Activated naive CD4-positive, alpha-beta T cell treated with anti-CD3 and anti-CD28 coated beads for 36 hours (primary cell): ENCODE measurements at regions of chr6 and their contacts with region 1.

Region 1: DNA sequence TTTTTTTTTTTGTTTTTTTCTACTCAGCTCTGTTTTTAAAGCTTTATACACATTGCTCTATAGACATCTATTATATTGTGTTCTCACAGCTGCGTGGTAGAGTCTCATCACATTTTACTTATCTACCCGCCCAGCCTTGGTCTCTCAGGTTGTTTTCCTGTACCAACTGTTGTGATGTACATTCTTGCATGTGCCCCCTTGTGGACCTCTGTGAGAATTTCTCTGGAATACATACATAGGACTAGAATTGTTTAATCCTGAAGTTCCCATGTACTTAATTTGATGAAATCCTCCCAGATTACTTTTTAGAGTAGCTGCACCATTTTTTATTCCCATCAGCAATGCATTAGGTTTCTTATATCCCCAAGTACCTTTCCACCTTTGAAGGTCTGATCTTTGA is 40.4 kb upstream of the TINAG start:
- DNase-seq: no peak
- H3K4me3 Mint-ChIP-seq: no peak overlapping the region
- H3K27ac Mint-ChIP-seq: no peak overlapping the region
- H3K4me1 Mint-ChIP-seq: no peaks in the 10 kb centered on the region
- H3K27me3 Mint-ChIP-seq: peaks cover 4% of the 10 kb centered on the region

Region 2: GRCh38 chr6:53986165-53986720 is 281.6 kb before region 1 on chr6:
- CTCF ChIA-PET with region 1: no interaction called
- intact Hi-C with region 1: loop called (anchors 10 kb)
- DNase-seq: peak; percentile 44
- H3K4me3 Mint-ChIP-seq: no peak overlapping the region
- H3K27ac Mint-ChIP-seq: no peak overlapping the region
- H3K4me1 Mint-ChIP-seq: no peaks in the 10 kb centered on the region
- H3K27me3 Mint-ChIP-seq: peaks cover 2% of the 10 kb centered on the region

Region 3: DNA sequence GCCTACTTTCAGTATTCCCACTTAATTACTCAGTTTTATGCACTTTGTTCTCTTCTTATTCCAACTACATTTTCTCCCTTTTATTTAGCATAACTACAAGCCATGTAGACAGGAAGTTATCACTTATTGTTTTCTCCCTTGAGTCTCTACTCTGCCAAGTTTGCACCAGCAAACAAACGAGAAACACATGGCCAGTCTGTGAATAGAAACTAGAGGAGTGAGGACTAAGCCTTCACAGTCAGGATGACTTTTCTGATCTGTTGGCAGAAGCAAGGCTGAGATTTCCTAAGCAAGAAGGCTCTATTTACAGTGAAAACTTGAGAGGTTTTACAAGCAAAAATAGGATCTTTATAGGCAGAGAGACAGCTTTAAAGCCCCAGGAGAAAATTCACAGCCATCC is 29.4 kb before region 1 on chr6:
- CTCF ChIA-PET with region 1: no interaction called
- intact Hi-C with region 1: no loop called
- DNase-seq: no peak
- H3K4me3 Mint-ChIP-seq: no peak overlapping the region
- H3K27ac Mint-ChIP-seq: no peak overlapping the region
- H3K4me1 Mint-ChIP-seq: no peaks in the 10 kb centered on the region
- H3K27me3 Mint-ChIP-seq: peaks cover 2% of the 10 kb centered on the region